BJ (cell line): ENCODE measurements at regions of chr14 and their contacts with region 1.

Region 1: DNA sequence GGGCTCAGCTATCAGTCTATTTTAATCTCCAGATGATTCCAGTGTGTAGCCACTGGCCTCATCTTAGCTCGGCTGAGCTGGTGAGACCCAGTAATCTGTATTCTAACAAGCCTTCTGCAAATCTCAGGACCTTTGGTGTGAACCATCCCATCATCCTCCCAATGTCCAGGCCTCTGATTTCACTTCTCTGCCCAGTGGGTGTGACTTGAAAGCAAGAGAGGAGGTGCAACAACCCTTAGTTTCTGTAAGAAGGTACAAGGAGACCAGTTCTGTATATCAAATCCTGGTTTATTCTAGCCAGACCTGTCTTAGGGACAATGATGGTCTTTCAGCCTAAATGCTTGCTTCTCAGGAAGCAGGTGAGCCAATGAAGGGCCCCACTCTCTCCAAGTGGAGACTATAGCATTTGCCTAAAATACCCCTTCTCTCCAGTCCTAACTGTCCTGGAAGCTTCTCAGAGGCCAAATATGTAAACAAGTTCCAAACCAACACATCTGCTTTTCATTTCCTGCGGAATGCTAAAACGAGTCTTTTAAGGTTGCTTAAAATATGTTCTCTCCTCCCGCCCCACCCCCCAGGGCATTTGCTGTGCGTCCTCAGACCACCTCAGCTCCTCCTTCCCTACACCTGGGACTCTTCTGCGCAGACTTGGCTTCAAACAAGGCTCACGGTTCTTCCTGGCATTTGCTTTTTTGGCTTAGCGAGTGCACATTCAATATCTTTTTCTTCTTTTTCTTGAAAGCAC is 78.4 kb upstream of the FUT8 start:
- DNase-seq: peak; percentile 82
- H3K4me3 ChIP-seq: no peak overlapping the region
- H3K27me3 ChIP-seq: no peaks in the 10 kb centered on the region
- CTCF ChIP-seq: no peak

Region 2: DNA sequence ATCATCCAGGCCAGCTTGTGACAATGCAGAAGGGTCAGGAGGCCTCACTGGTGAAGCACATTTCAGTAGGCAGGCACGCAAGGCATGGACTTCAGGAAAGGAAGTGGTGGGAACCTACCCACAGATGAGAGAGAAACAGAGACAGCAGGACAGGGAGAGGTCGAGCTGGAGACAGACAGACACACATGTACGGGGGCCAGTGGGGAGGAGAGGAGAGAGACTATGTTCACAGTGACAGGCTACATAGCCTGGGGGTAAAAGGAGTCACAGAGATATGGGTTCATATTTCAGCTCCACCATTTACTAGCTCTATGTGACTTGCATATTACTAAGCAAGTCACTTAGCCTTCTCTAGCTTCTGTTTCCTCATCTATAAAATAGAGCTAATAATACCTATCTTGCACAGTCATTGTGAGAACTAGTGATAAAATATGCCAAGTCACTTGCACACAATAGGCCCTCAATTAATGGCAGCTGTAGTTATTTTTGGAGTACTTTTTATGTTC is 12.7 kb before region 1 on chr14:
- CTCF ChIA-PET with region 1: interaction called, 10 read pairs
- POLR2A ChIA-PET with region 1: interaction called, 4 read pairs
- DNase-seq: peak; percentile 49
- H3K4me3 ChIP-seq: no peak overlapping the region
- H3K27me3 ChIP-seq: no peaks in the 10 kb centered on the region
- CTCF ChIP-seq: no peak

Region 3: DNA sequence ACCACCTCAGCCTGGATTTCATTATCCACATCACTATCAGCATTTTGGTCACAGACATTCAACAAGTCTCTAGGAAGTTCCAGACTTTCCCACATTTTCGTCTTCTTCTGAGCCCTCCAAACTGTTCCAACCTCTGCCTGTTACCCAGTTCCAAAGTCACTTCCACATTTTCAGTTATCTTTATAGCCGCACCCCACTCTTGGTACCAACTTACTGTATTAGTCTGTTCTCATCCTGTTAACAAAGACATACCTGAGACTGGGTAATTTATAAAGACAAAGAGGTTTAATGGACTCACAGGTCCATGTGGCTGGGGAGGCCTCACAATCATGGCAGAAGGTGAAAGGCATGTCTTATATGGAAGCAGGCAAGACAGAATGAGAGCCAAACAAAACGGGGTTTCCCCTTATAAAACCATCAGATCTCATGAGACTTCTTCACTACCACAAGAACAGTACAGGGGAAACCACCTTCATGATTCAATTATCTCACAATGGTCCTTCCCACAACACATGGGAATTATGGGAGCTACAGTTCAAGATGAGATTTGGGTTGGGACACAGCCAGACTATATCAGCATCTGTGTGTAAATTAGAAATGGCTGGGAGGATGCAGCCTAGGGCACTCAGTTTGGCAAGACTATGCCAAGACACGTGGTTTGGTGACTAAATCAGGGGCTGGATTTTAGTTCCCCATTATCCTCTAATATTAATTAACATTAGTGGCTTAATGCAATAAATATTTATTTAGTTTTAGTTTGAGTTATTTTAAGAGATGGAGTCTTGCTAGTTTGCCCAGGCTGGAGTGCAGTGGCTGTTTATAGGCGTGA is 62.2 kb after region 1 on chr14:
- CTCF ChIA-PET with region 1: no interaction called
- POLR2A ChIA-PET with region 1: no interaction called
- DNase-seq: no peak
- H3K4me3 ChIP-seq: no peak overlapping the region
- H3K27me3 ChIP-seq: no peaks in the 10 kb centered on the region
- CTCF ChIP-seq: no peak